T-cell (primary cell): ENCODE measurements at regions of chr20 and their contacts with region 1.

Region 1: DNA sequence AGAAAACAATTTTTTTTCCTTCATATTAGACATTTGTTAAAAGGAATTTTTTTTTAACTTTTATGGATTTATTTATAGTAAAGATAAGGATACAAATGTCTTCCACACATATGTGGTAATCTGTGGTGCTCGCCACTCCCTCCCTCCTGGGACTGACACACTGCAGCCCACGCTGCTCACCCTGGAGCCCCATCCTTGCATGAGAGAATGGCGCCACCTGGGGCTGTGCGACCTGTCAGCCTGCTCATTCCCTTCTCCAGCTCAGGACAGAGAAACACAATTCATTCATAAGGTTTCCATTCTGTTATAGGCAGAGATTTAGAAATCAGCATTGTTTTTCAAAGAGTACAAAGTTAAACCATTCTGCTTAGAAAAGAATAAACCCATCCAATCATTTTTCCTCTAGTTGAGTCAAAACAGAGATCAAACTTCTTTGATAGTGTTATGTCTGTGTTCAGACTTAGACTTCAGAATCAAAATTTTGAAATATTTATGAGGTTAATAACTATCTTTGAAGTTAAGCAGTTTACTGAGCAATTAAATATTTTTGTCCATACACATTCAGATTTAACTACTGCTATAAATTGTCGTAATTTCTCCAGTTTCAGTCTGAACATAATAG is 42.8 kb upstream of the DYNLRB1 start:
- DNase-seq: peak in 26 of 35 experiments; percentile 3 to 40 (median 16)
- ATAC-seq: peak in 1 of 4 experiments; percentile 57
- H3K4me3 ChIP-seq: no peak overlapping the region
- H3K4me3 Mint-ChIP-seq: no peak overlapping the region
- H3K27ac ChIP-seq: no peak overlapping the region
- H3K27ac Mint-ChIP-seq: no peak overlapping the region
- H3K4me1 ChIP-seq: no peaks in the 10 kb centered on the region
- H3K4me1 Mint-ChIP-seq: peaks cover 6 to 7% (median 7%) of the 10 kb centered on the region in 3 donors
- H3K27me3 ChIP-seq: no peaks in the 10 kb centered on the region
- H3K27me3 Mint-ChIP-seq: no peaks in the 10 kb centered on the region

Region 2: GRCh38 chr20:34282041-34282440 is 191.3 kb before region 1 on chr20:
- CTCF ChIA-PET with region 1: no interaction called
- POLR2A ChIA-PET with region 1: no interaction called
- DNase-seq: no peak
- ATAC-seq: no peak
- H3K4me3 ChIP-seq: no peak overlapping the region
- H3K4me3 Mint-ChIP-seq: no peak overlapping the region
- H3K27ac ChIP-seq: no peak overlapping the region
- H3K27ac Mint-ChIP-seq: no peak overlapping the region
- H3K4me1 ChIP-seq: no peaks in the 10 kb centered on the region
- H3K4me1 Mint-ChIP-seq: no peaks in the 10 kb centered on the region
- H3K27me3 ChIP-seq: no peaks in the 10 kb centered on the region
- H3K27me3 Mint-ChIP-seq: no peaks in the 10 kb centered on the region

Region 3: GRCh38 chr20:34377072-34377847 is 96.1 kb before region 1 on chr20:
- CTCF ChIA-PET with region 1: no interaction called
- POLR2A ChIA-PET with region 1: no interaction called
- DNase-seq: no peak
- ATAC-seq: no peak
- H3K4me3 ChIP-seq: no peak overlapping the region
- H3K4me3 Mint-ChIP-seq: no peak overlapping the region
- H3K27ac ChIP-seq: peak overlapping the region; percentile 23
- H3K27ac Mint-ChIP-seq: no peak overlapping the region
- H3K4me1 ChIP-seq: peaks cover 0 to 19% of the 10 kb centered on the region in 2 experiments
- H3K4me1 Mint-ChIP-seq: peaks cover 30 to 49% (median 48%) of the 10 kb centered on the region in 3 donors
- H3K27me3 ChIP-seq: no peaks in the 10 kb centered on the region
- H3K27me3 Mint-ChIP-seq: no peaks in the 10 kb centered on the region

Region 4: GRCh38 chr20:34582911-34583310 is 109.5 kb after region 1 on chr20:
- CTCF ChIA-PET with region 1: interaction called in 1 of 2 experiments, 11 read pairs
- POLR2A ChIA-PET with region 1: no interaction called
- DNase-seq: no peak
- ATAC-seq: no peak
- H3K4me3 ChIP-seq: no peak overlapping the region
- H3K4me3 Mint-ChIP-seq: no peak overlapping the region
- H3K27ac ChIP-seq: no peak overlapping the region
- H3K27ac Mint-ChIP-seq: peak overlapping the region in 1 of 2 donors; percentile 52
- H3K4me1 ChIP-seq: peaks cover 2 to 20% of the 10 kb centered on the region in 2 experiments
- H3K4me1 Mint-ChIP-seq: peaks cover 14 to 34% (median 27%) of the 10 kb centered on the region in 3 donors
- H3K27me3 ChIP-seq: no peaks in the 10 kb centered on the region
- H3K27me3 Mint-ChIP-seq: no peaks in the 10 kb centered on the region